ENCODE measurements at regions of chr5 and their contacts with region 1.

Region 1: GRCh38 chr5:115634343-115635132 is 8.7 kb upstream of the TMED7 start:
- DNase-seq: peak; percentile 94
- H3K4me3 Mint-ChIP-seq: no peak overlapping the region
- H3K27ac Mint-ChIP-seq: no peak overlapping the region
- H3K4me1 Mint-ChIP-seq: peaks cover 38% of the 10 kb centered on the region
- H3K27me3 Mint-ChIP-seq: peaks cover 12% of the 10 kb centered on the region

Region 2: DNA sequence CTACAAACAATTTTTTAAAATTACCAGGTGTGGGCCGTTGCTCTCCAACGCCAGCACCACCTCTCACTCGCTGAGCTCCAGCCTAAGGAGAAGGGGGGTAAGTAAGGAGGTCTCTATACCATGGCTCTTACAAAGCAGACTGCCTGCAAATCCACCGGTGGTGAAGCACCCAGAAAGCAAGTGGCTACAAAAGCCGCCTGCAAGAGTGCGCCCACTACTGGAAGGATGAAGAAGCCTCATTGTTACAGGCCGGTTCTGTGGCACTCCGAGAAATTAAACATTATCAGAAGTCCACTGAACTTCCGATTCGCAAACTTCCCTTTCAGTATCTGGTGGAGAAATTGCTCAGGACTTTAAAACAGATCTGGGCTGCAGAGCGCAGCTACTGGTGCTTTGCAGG is 135.9 kb after region 1 on chr5:
- CTCF ChIA-PET with region 1: interaction called, 11 read pairs
- intact Hi-C with region 1: loop called (anchors 1 kb)
- DNase-seq: peak; percentile 35
- H3K4me3 Mint-ChIP-seq: no peak overlapping the region
- H3K27ac Mint-ChIP-seq: no peak overlapping the region
- H3K4me1 Mint-ChIP-seq: peaks cover 3% of the 10 kb centered on the region
- H3K27me3 Mint-ChIP-seq: peaks cover 7% of the 10 kb centered on the region

Region 3: GRCh38 chr5:115831163-115831768 is 196.7 kb after region 1 on chr5:
- CTCF ChIA-PET with region 1: interaction called, 4 read pairs
- intact Hi-C with region 1: loop called (anchors 1 kb)
- DNase-seq: peak; percentile 27
- H3K4me3 Mint-ChIP-seq: no peak overlapping the region
- H3K27ac Mint-ChIP-seq: no peak overlapping the region
- H3K4me1 Mint-ChIP-seq: peaks cover 5% of the 10 kb centered on the region
- H3K27me3 Mint-ChIP-seq: no peaks in the 10 kb centered on the region

Region 4: DNA sequence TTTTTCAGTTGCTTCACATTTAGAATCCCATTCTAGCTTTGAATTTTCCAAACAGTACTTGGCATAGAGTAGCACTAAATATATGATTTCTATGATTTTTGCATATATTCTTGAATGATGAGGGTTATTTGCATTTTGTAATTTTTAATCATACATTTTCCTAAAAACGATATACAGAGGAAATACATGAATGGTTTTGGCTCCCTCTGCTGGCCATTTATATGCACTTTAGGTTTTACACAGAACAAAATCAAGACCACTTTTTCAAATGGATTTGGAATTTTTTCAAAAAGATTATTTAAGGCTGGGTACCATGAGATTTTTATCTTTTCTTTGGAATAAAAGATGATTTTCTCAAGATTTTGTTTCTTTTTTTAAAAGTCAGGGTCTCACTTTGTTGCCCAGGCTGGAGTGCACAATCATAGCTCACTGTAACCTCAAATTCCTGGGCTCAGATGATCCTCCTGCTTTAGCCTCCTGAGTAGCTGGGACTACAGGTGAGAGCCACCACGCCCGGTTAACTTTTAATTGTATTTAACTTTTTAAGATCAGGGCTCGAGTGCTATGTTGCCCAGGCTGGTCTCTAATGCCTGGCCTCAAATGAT is 433.6 kb after region 1 on chr5:
- CTCF ChIA-PET with region 1: interaction called, 26 read pairs
- intact Hi-C with region 1: loop called (anchors 1 kb)
- DNase-seq: peak; percentile 55
- H3K4me3 Mint-ChIP-seq: no peak overlapping the region
- H3K27ac Mint-ChIP-seq: no peak overlapping the region
- H3K4me1 Mint-ChIP-seq: no peaks in the 10 kb centered on the region
- H3K27me3 Mint-ChIP-seq: peaks cover 22% of the 10 kb centered on the region